Head of caudate nucleus (tissue), 42 donors: ENCODE measurements at regions of chr17 and their contacts with region 1.

Region 1: DNA sequence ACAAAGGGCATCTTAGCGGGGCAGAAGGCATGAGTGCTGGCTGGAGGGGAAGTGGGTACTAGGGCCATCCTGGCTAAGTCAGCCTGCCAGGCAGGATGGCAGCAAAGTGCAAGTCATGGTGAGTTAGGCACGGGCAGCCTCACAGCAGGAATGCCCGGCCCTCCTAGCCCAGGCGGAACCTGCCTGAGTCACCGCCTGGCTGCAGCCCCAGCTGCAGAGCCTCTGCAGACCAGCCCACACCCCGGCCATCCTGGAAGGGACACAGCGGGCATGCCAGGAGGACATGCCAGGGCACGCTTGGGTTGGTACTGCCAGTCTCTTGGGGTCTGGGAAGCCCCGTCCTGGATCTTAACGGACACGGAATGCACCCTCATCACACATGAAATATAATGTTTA is 4.9 kb upstream of the ALDH3A1 start:
- DNase-seq: peak; percentile 59 to 94 (median 79)

Region 2: DNA sequence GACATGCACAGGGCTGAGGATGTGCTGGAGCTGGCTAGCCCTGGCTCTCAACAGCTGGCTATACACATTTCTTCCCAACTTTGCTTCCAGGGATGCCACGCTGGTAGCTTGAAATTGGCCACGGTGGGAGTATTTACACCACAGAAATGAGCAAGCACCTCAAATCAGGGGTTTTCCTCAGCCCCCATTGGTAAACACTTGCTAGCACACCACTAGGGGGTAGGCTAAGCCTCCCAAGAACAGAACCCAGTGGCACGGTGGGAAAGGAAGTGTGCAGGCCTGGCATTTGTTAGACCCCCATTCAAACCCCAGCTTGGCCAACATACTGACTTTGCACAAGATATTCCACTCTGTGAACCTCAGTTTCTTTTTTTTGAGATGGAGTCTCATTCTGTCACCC is 1767.5 kb before region 1 on chr17:
- intact Hi-C with region 1: no loop called
- DNase-seq: no peak

Region 3: DNA sequence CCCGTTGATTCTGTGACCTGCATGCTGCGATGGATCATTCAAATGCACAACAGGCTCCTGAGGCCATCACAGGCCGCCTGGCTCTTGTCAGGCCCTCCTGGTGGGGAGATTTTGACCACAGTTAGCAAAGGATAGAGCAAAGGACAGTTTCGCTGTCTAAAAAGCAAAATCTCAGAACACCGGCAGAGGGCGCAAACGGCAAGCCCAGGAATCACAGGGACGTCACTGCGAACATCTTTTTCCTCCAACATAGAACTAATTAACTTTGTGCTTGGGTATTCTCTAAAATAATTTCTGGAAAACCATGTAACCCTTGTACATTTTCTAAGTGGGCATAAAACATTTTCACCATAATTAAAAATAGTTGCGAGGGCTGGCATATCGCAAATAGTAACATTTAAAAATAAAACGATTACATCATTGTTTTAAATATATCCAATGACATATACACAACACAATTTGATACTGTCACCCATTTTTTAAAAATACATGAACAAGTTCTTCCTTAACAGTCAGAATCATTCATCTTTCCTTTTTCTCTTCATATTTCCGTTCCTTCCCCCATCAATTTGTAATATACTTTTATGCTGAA is 239.1 kb before region 1 on chr17:
- intact Hi-C with region 1: loop called (anchors 5 kb)
- DNase-seq: peak; percentile 59 to 92 (median 80)

Region 4: GRCh38 chr17:19706791-19707727 is 46.0 kb before region 1 on chr17:
- intact Hi-C with region 1: no loop called
- DNase-seq: peak in 18 of 42 donors; percentile 18 to 66 (median 48)

Region 5: GRCh38 chr17:19728079-19728495 is 25.0 kb before region 1 on chr17:
- intact Hi-C with region 1: loop called (anchors 2 kb)
- DNase-seq: peak; percentile 49 to 93 (median 85)